ENCODE measurements at regions of chr16 and their contacts with region 1.

Region 1: DNA sequence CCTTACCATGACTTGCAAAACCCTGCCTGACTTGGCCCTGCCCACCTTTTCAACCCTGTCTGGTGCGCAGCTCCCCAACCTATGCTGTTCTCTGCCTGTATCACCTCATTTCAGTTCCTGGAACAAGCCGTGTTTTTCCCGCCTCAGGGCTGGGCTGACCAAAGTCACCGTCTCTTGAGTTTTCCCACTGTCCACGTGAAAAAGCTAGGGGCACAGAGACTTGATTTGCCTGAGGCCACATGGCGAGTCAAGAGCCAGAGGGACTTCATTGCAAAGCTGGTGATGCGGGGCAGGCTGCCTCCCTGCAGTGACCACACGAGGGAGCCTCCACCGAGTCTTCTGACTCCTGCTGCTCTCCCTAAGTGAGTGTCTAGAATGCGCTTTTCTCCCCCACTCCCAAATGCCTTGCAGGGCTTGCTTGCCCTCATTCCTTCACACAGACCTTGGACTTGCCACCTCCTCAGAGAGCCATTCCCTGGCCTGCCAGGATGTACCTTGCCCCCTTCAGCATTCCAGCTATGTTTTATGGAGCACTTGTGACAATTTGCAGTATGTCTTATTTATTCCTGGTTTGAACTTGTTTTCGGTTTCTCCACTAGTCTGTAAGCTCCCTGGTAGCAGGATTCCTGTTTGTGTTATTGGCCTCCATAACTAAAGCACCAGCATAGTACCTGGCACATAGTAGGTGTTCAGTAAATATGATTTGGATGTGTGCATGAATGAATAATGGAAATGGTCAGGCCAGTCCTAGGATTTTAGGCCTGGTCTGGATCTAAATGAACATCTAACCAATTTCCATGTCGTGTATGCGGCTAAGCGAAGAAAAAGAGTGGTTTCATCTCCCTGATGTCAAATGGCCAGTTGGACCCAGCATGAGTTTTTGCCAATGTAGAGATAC is 252.3 kb downstream of the SNX29 start:
- DNase-seq: peak; percentile 71
- ATAC-seq: peak; percentile 65
- H3K4me3 ChIP-seq: no peak overlapping the region
- H3K27ac ChIP-seq: no peak overlapping the region
- H3K4me1 ChIP-seq: peaks cover 37% of the 10 kb centered on the region
- H3K27me3 ChIP-seq: no peaks in the 10 kb centered on the region
- CTCF ChIP-seq: peak; percentile 76
- POLR2A ChIP-seq: no peak
- RAD21 ChIP-seq: peak; percentile 71

Region 2: GRCh38 chr16:12257926-12258561 is 29.2 kb after region 1 on chr16:
- CTCF ChIA-PET with region 1: interaction called, 5 read pairs
- POLR2A ChIA-PET with region 1: no interaction called
- dilution Hi-C with region 1: no loop called
- in situ Hi-C with region 1: no loop called
- intact Hi-C with region 1: loop called (anchors 5 kb)
- DNase-seq: no peak
- ATAC-seq: no peak
- H3K4me3 ChIP-seq: no peak overlapping the region
- H3K27ac ChIP-seq: no peak overlapping the region
- H3K4me1 ChIP-seq: peaks cover 11% of the 10 kb centered on the region
- H3K27me3 ChIP-seq: no peaks in the 10 kb centered on the region
- CTCF ChIP-seq: 0 out of 2 replicates have a peak, but pooled peaks have one; percentile 6
- POLR2A ChIP-seq: no peak
- RAD21 ChIP-seq: no peak

Region 3: DNA sequence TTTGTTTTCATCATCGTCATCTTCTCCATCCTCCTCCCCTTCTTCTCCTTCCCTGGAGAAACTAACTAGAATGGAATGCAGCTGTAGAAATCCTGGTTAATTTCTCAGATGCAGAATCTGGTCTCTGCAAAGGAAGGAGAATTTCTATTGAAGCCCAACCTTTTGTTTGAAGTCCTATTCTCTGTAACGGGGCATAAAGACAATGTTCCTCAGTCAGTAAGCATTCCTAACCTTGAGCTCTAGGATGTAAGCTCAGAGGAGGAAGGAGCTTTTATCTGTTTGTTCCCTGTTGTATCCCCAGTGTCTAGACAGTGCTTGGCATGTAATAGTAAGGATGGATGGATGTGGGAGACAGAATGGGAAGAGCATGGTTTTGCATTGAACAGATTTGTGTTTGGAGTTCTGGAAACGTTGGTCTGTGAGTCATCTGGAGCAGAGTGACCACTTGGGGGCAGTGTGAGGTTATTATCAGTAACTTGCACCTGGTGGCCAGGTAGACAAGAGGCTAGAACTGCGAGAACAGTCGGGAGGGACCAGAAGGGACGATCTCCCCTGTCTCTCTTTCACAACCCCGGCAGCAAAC is 111.4 kb after region 1 on chr16:
- CTCF ChIA-PET with region 1: interaction called, 3 read pairs
- POLR2A ChIA-PET with region 1: no interaction called
- dilution Hi-C with region 1: no loop called
- in situ Hi-C with region 1: no loop called
- intact Hi-C with region 1: loop called (anchors 5 kb)
- DNase-seq: peak; percentile 73
- ATAC-seq: peak; percentile 82
- H3K4me3 ChIP-seq: no peak overlapping the region
- H3K27ac ChIP-seq: no peak overlapping the region
- H3K4me1 ChIP-seq: peaks cover 15% of the 10 kb centered on the region
- H3K27me3 ChIP-seq: no peaks in the 10 kb centered on the region
- CTCF ChIP-seq: peak; percentile 48
- POLR2A ChIP-seq: no peak
- RAD21 ChIP-seq: no peak

Region 4: GRCh38 chr16:12392585-12393091 is 163.8 kb after region 1 on chr16:
- CTCF ChIA-PET with region 1: interaction called, 3 read pairs
- POLR2A ChIA-PET with region 1: no interaction called
- dilution Hi-C with region 1: no loop called
- in situ Hi-C with region 1: no loop called
- intact Hi-C with region 1: loop called (anchors 5 kb)
- DNase-seq: no peak
- ATAC-seq: no peak
- H3K4me3 ChIP-seq: no peak overlapping the region
- H3K27ac ChIP-seq: no peak overlapping the region
- H3K4me1 ChIP-seq: peaks cover 9% of the 10 kb centered on the region
- H3K27me3 ChIP-seq: no peaks in the 10 kb centered on the region
- CTCF ChIP-seq: 0 out of 2 replicates have a peak, but pooled peaks have one; percentile 7
- POLR2A ChIP-seq: no peak
- RAD21 ChIP-seq: no peak

Region 5: GRCh38 chr16:12455287-12455798 is 226.5 kb after region 1 on chr16:
- CTCF ChIA-PET with region 1: no interaction called
- POLR2A ChIA-PET with region 1: no interaction called
- dilution Hi-C with region 1: no loop called
- in situ Hi-C with region 1: no loop called
- intact Hi-C with region 1: loop called (anchors 10 kb)
- DNase-seq: peak; percentile 55
- ATAC-seq: peak; percentile 100
- H3K4me3 ChIP-seq: no peak overlapping the region
- H3K27ac ChIP-seq: no peak overlapping the region
- H3K4me1 ChIP-seq: no peaks in the 10 kb centered on the region
- H3K27me3 ChIP-seq: no peaks in the 10 kb centered on the region
- CTCF ChIP-seq: peak; percentile 89
- POLR2A ChIP-seq: no peak
- RAD21 ChIP-seq: peak; percentile 94

Region 6: GRCh38 chr16:12819126-12820117 is 590.6 kb after region 1 on chr16:
- CTCF ChIA-PET with region 1: no interaction called
- POLR2A ChIA-PET with region 1: no interaction called
- dilution Hi-C with region 1: no loop called
- in situ Hi-C with region 1: no loop called
- intact Hi-C with region 1: loop called (anchors 5 kb)
- DNase-seq: peak; percentile 36
- ATAC-seq: peak; percentile 81
- H3K4me3 ChIP-seq: no peak overlapping the region
- H3K27ac ChIP-seq: no peak overlapping the region
- H3K4me1 ChIP-seq: no peaks in the 10 kb centered on the region
- H3K27me3 ChIP-seq: no peaks in the 10 kb centered on the region
- CTCF ChIP-seq: peak; percentile 81
- POLR2A ChIP-seq: no peak
- RAD21 ChIP-seq: peak; percentile 86

Measured in IMR-90 (cell line).